Mammary epithelial cell (primary cell): ENCODE measurements at regions of chr1 and their contacts with region 1.

Region 1: GRCh38 chr1:98870959-98871903 is 133.4 kb downstream of the PLPPR5 start:
- DNase-seq: peak; percentile 7
- H3K4me3 ChIP-seq: no peak overlapping the region
- H3K27ac ChIP-seq: no peak overlapping the region
- H3K4me1 ChIP-seq: peaks cover 4% of the 10 kb centered on the region
- H3K27me3 ChIP-seq: no peaks in the 10 kb centered on the region
- CTCF ChIP-seq: no peak

Region 2: DNA sequence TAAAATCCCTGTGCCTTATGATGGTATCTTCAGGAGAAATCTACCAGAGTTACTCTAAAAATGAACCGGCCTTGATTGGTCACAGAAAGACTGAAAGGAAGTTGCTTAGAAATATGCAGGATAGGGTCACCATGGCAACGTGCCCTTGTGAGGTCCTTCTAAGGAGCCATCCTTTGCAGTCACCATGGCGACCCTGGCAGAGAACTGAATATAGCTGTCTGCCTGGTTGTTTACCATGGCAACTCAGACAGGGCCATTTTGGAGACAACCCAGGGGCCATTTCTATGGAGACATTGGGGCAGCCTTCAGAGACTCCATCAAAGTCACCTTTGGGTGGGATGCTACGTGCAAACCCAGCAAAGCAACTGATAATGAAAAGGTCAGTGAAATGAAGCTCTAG is 166.8 kb before region 1 on chr1:
- CTCF ChIA-PET with region 1: no interaction called
- dilution Hi-C with region 1: no loop called
- in situ Hi-C with region 1: no loop called
- intact Hi-C with region 1: no loop called
- DNase-seq: no peak
- H3K4me3 ChIP-seq: no peak overlapping the region
- H3K27ac ChIP-seq: no peak overlapping the region
- H3K4me1 ChIP-seq: no peaks in the 10 kb centered on the region
- H3K27me3 ChIP-seq: no peaks in the 10 kb centered on the region
- CTCF ChIP-seq: no peak

Region 3: GRCh38 chr1:98766255-98766654 is 105.0 kb before region 1 on chr1:
- CTCF ChIA-PET with region 1: no interaction called
- dilution Hi-C with region 1: no loop called
- in situ Hi-C with region 1: no loop called
- intact Hi-C with region 1: no loop called
- DNase-seq: no peak
- H3K4me3 ChIP-seq: no peak overlapping the region
- H3K27ac ChIP-seq: no peak overlapping the region
- H3K4me1 ChIP-seq: no peaks in the 10 kb centered on the region
- H3K27me3 ChIP-seq: no peaks in the 10 kb centered on the region
- CTCF ChIP-seq: no peak

Region 4: GRCh38 chr1:98824736-98825135 is 46.5 kb before region 1 on chr1:
- CTCF ChIA-PET with region 1: no interaction called
- dilution Hi-C with region 1: loop called (anchors 10 kb)
- in situ Hi-C with region 1: no loop called
- intact Hi-C with region 1: no loop called
- DNase-seq: no peak
- H3K4me3 ChIP-seq: no peak overlapping the region
- H3K27ac ChIP-seq: no peak overlapping the region
- H3K4me1 ChIP-seq: no peaks in the 10 kb centered on the region
- H3K27me3 ChIP-seq: peaks cover 1% of the 10 kb centered on the region
- CTCF ChIP-seq: no peak